ENCODE measurements at regions of chr20 and their contacts with region 1.

Region 1: GRCh38 chr20:50695135-50695872 is 4.0 kb upstream of the RIPOR3 start:
- DNase-seq: no peak

Region 2: DNA sequence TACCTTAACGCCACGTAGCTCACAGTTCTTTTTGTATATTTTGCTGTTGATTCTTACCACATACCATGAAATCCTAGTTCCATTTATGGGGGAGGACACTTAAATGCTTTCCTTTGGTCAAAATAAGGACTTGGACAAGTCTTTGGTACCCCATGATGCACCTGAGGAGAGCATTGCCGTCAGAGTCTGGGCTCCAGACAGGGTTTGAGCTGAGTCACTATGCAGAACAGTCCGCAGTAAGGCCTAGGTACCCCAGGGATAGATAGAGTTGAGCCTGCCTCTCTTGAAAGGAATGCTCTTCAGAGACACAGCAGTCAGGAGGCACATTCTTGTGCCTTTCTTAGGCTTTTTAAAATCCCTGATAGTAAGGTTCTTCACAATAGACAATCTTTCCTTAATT is 42.0 kb after region 1 on chr20:
- in situ Hi-C with region 1: loop called (anchors 5 kb)
- DNase-seq: no peak

Measured in G401 (cell line).